ENCODE measurements at regions of chr9 and their contacts with region 1.

Region 1: GRCh38 chr9:114339130-114339908 is 9.7 kb downstream of the ORM2 start:
- DNase-seq: peak; percentile 71
- ATAC-seq: peak; percentile 70
- H3K4me3 Mint-ChIP-seq: no peak overlapping the region
- H3K27ac Mint-ChIP-seq: peak overlapping the region; percentile 49
- H3K4me1 Mint-ChIP-seq: peaks cover 34% of the 10 kb centered on the region
- H3K27me3 Mint-ChIP-seq: no peaks in the 10 kb centered on the region
- CTCF ChIP-seq: peak; percentile 84

Region 2: GRCh38 chr9:114196979-114197622 is 142.2 kb before region 1 on chr9:
- CTCF ChIA-PET with region 1: no interaction called
- POLR2A ChIA-PET with region 1: no interaction called
- intact Hi-C with region 1: no loop called
- DNase-seq: no peak
- ATAC-seq: no peak
- H3K4me3 Mint-ChIP-seq: no peak overlapping the region
- H3K27ac Mint-ChIP-seq: no peak overlapping the region
- H3K4me1 Mint-ChIP-seq: no peaks in the 10 kb centered on the region
- H3K27me3 Mint-ChIP-seq: peaks cover 4% of the 10 kb centered on the region
- CTCF ChIP-seq: no peak

Region 3: DNA sequence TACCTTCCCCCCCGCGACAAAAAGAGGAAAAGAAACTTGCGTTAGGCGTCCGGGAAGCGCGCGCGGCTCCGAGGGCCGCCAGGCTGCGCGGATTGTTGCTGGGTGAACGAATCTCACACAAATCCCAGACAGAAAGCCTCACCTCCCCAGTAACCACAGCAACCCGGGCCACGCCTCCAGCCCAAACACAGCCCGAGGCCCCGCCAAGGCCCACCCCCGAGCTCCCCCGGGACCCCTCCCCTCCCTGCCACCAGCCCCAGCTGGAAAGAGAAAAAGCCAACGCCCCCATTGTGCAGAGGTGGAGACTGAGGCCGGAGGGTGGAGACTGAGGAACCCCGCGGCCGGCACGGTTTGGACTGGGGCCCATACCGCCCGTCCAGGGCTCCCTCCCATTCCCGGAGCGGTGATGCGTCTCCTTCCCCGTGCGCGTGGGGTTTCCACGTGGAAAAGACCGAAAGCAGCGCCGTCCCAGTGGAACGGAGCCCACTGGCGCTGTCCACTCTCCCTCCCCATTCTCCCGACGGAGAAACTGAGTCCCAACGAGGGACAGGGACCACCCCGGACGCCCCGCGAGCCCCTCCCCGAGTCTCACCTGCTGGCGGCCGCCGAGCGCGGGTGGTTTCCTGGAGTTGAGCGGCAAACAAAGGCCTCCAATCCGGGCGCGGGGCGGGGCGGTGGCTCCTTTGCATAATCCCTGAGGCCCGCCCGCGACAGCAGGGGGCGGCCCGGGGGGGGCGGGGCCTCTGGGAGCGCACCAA is 58.7 kb after region 1 on chr9:
- CTCF ChIA-PET with region 1: interaction called, 20 read pairs
- POLR2A ChIA-PET with region 1: interaction called, 277 read pairs
- intact Hi-C with region 1: no loop called
- DNase-seq: peak; percentile 99
- ATAC-seq: peak; percentile 91
- H3K4me3 Mint-ChIP-seq: peak overlapping the region; percentile 89
- H3K27ac Mint-ChIP-seq: peak overlapping the region; percentile 65
- H3K4me1 Mint-ChIP-seq: peaks cover 42% of the 10 kb centered on the region
- H3K27me3 Mint-ChIP-seq: no peaks in the 10 kb centered on the region
- CTCF ChIP-seq: no peak